CD4-positive, alpha-beta T cell (primary cell): ENCODE measurements at regions of chr18 and their contacts with region 1.

Region 1: GRCh38 chr18:54392543-54393023 is 34.9 kb downstream of the C18orf54 start:
- DNase-seq: peak in 3 of 14 experiments; percentile 54 to 74 (median 71)
- ATAC-seq: peak; percentile 69
- H3K4me3 ChIP-seq: no peak overlapping the region
- H3K4me3 Mint-ChIP-seq: no peak overlapping the region
- H3K27ac ChIP-seq: no peak overlapping the region
- H3K27ac Mint-ChIP-seq: no peak overlapping the region
- H3K4me1 ChIP-seq: no peaks in the 10 kb centered on the region
- H3K4me1 Mint-ChIP-seq: no peaks in the 10 kb centered on the region
- H3K27me3 ChIP-seq: no peaks in the 10 kb centered on the region
- H3K27me3 Mint-ChIP-seq: peaks cover 16% of the 10 kb centered on the region
- CTCF ChIP-seq: peak; percentile 80

Region 2: GRCh38 chr18:53093636-53094035 is 1298.9 kb before region 1 on chr18:
- CTCF ChIA-PET with region 1: no interaction called
- POLR2A ChIA-PET with region 1: no interaction called
- intact Hi-C with region 1: no loop called
- DNase-seq: no peak
- ATAC-seq: no peak
- H3K4me3 ChIP-seq: no peak overlapping the region
- H3K4me3 Mint-ChIP-seq: no peak overlapping the region
- H3K27ac ChIP-seq: no peak overlapping the region
- H3K27ac Mint-ChIP-seq: no peak overlapping the region
- H3K4me1 ChIP-seq: no peaks in the 10 kb centered on the region
- H3K4me1 Mint-ChIP-seq: no peaks in the 10 kb centered on the region
- H3K27me3 ChIP-seq: no peaks in the 10 kb centered on the region
- H3K27me3 Mint-ChIP-seq: no peaks in the 10 kb centered on the region
- CTCF ChIP-seq: no peak

Region 3: GRCh38 chr18:54330768-54331548 is 61.6 kb before region 1 on chr18:
- CTCF ChIA-PET with region 1: no interaction called
- POLR2A ChIA-PET with region 1: no interaction called
- intact Hi-C with region 1: no loop called
- DNase-seq: no peak
- ATAC-seq: no peak
- H3K4me3 ChIP-seq: no peak overlapping the region
- H3K4me3 Mint-ChIP-seq: no peak overlapping the region
- H3K27ac ChIP-seq: no peak overlapping the region
- H3K27ac Mint-ChIP-seq: no peak overlapping the region
- H3K4me1 ChIP-seq: no peaks in the 10 kb centered on the region
- H3K4me1 Mint-ChIP-seq: no peaks in the 10 kb centered on the region
- H3K27me3 ChIP-seq: no peaks in the 10 kb centered on the region
- H3K27me3 Mint-ChIP-seq: peaks cover 8% of the 10 kb centered on the region
- CTCF ChIP-seq: no peak

Region 4: DNA sequence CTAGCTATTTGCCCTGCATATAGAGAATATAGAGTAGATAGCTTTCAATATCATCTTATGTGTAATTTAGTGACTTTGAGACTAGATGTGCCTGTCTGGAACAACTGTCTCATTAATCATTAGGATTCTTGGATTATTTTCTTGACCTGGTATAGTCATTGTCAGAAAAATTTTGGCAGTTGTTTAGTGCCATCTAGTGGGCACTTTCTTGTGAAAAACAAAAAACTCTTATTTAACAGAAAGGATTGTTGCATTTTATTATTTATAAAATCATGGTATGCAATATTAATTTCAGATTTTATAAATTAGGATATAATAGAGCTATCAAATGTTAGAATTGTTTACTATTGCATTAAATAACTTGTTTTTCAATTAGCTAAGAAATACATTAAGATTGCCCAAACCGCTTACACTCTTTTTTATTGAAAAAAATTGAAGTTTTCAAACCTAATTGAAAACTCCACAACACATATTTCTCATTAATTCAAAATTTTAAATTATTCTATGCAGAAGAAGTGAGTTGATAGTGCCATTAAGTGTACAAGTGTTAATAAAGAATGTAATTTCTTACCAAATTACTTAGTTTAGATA is 278.8 kb after region 1 on chr18:
- CTCF ChIA-PET with region 1: no interaction called
- POLR2A ChIA-PET with region 1: no interaction called
- intact Hi-C with region 1: loop called in 1 of 2 experiments (anchors 5 kb)
- DNase-seq: peak in 3 of 14 experiments; percentile 33 to 40 (median 39)
- ATAC-seq: no peak
- H3K4me3 ChIP-seq: no peak overlapping the region
- H3K4me3 Mint-ChIP-seq: no peak overlapping the region
- H3K27ac ChIP-seq: no peak overlapping the region
- H3K27ac Mint-ChIP-seq: no peak overlapping the region
- H3K4me1 ChIP-seq: no peaks in the 10 kb centered on the region
- H3K4me1 Mint-ChIP-seq: no peaks in the 10 kb centered on the region
- H3K27me3 ChIP-seq: no peaks in the 10 kb centered on the region
- H3K27me3 Mint-ChIP-seq: peaks cover 7% of the 10 kb centered on the region
- CTCF ChIP-seq: peak; percentile 63